CD4-positive, alpha-beta memory T cell (primary cell): ENCODE measurements at regions of chr6 and their contacts with region 1.

Region 1: DNA sequence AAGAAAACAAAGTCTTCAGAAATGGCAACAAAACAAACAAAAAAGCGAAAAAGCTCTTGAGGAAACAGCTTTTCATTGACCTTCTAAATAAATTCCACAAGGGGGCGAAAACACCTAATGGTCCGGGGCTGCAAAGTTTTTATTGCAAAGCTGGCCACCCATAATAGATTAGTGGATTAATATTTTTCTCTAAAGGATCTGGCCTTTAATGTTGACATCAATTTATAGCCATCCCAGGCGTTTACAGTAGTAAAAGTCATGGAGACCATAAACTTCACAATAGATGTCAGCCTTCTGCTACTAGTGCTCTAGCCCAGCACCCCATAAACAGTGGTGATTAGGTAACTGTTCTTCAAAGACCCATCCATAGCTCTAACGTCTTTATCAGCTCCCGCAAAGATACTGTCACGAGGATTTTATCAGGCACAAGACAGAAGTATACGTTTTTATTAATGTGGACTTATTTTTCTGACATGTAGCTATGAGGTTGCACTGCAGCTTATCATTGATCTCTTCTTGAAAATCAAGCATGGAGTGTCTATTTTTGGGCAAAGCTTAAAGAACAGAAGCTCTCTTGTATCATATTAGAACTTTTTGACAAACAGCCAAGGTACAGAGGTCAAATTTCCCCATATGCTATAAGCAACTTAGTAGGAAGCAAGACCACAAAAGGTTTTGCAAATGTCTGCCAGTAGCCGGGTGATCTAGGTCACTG is 4.7 kb downstream of the CITED2 start:
- DNase-seq: peak; percentile 36 to 54 (median 48)
- H3K4me3 ChIP-seq: no peak overlapping the region
- H3K4me3 Mint-ChIP-seq: peak overlapping the region; percentile 60 to 100 (median 84)
- H3K27ac ChIP-seq: peak overlapping the region; percentile 40
- H3K27ac Mint-ChIP-seq: peak overlapping the region; percentile 80 to 99 (median 88)
- H3K4me1 ChIP-seq: peaks cover 40% of the 10 kb centered on the region
- H3K4me1 Mint-ChIP-seq: peaks cover 29 to 62% (median 36%) of the 10 kb centered on the region in 4 donors
- H3K27me3 ChIP-seq: no peaks in the 10 kb centered on the region
- H3K27me3 Mint-ChIP-seq: no peaks in the 10 kb centered on the region

Region 2: GRCh38 chr6:138817822-138818308 is 551.9 kb before region 1 on chr6:
- CTCF ChIA-PET with region 1: interaction called, 28 read pairs
- POLR2A ChIA-PET with region 1: interaction called, 3 read pairs
- intact Hi-C with region 1: loop called (anchors 1 kb)
- DNase-seq: no peak
- H3K4me3 ChIP-seq: no peak overlapping the region
- H3K4me3 Mint-ChIP-seq: no peak overlapping the region
- H3K27ac ChIP-seq: no peak overlapping the region
- H3K27ac Mint-ChIP-seq: peak overlapping the region in 1 of 7 donors; percentile 55
- H3K4me1 ChIP-seq: no peaks in the 10 kb centered on the region
- H3K4me1 Mint-ChIP-seq: peaks cover 3 to 10% (median 7%) of the 10 kb centered on the region in 4 donors
- H3K27me3 ChIP-seq: no peaks in the 10 kb centered on the region
- H3K27me3 Mint-ChIP-seq: peaks cover 0 to 2% of the 10 kb centered on the region in 2 donors

Region 3: GRCh38 chr6:139230391-139230840 is 139.3 kb before region 1 on chr6:
- CTCF ChIA-PET with region 1: interaction called, 38 read pairs
- POLR2A ChIA-PET with region 1: interaction called, 9 read pairs
- intact Hi-C with region 1: loop called (anchors 1 kb)
- DNase-seq: peak in 4 of 5 donors; percentile 17 to 31 (median 22)
- H3K4me3 ChIP-seq: no peak overlapping the region
- H3K4me3 Mint-ChIP-seq: no peak overlapping the region
- H3K27ac ChIP-seq: no peak overlapping the region
- H3K27ac Mint-ChIP-seq: peak overlapping the region in 2 of 7 donors; percentile 19 to 65
- H3K4me1 ChIP-seq: no peaks in the 10 kb centered on the region
- H3K4me1 Mint-ChIP-seq: peaks cover 6 to 13% (median 9%) of the 10 kb centered on the region in 4 donors
- H3K27me3 ChIP-seq: no peaks in the 10 kb centered on the region
- H3K27me3 Mint-ChIP-seq: no peaks in the 10 kb centered on the region

Region 4: GRCh38 chr6:139533573-139534471 is 164.1 kb after region 1 on chr6:
- CTCF ChIA-PET with region 1: interaction called, 21 read pairs
- POLR2A ChIA-PET with region 1: interaction called, 153 read pairs
- intact Hi-C with region 1: loop called (anchors 2 kb)
- DNase-seq: peak in 2 of 5 donors; percentile 6 to 10
- H3K4me3 ChIP-seq: no peak overlapping the region
- H3K4me3 Mint-ChIP-seq: peak overlapping the region; percentile 28 to 93 (median 76)
- H3K27ac ChIP-seq: peak overlapping the region; percentile 39
- H3K27ac Mint-ChIP-seq: peak overlapping the region; percentile 83 to 96 (median 92)
- H3K4me1 ChIP-seq: peaks cover 84% of the 10 kb centered on the region
- H3K4me1 Mint-ChIP-seq: peaks cover 47 to 76% (median 59%) of the 10 kb centered on the region in 4 donors
- H3K27me3 ChIP-seq: no peaks in the 10 kb centered on the region
- H3K27me3 Mint-ChIP-seq: no peaks in the 10 kb centered on the region

Region 5: GRCh38 chr6:139895205-139895793 is 525.6 kb after region 1 on chr6:
- CTCF ChIA-PET with region 1: interaction called, 24 read pairs
- POLR2A ChIA-PET with region 1: interaction called, 5 read pairs
- intact Hi-C with region 1: loop called (anchors 1 kb)
- DNase-seq: no peak
- H3K4me3 ChIP-seq: no peak overlapping the region
- H3K4me3 Mint-ChIP-seq: no peak overlapping the region
- H3K27ac ChIP-seq: no peak overlapping the region
- H3K27ac Mint-ChIP-seq: no peak overlapping the region
- H3K4me1 ChIP-seq: no peaks in the 10 kb centered on the region
- H3K4me1 Mint-ChIP-seq: no peaks in the 10 kb centered on the region
- H3K27me3 ChIP-seq: no peaks in the 10 kb centered on the region
- H3K27me3 Mint-ChIP-seq: peaks cover 2 to 3% of the 10 kb centered on the region in 2 donors

Region 6: DNA sequence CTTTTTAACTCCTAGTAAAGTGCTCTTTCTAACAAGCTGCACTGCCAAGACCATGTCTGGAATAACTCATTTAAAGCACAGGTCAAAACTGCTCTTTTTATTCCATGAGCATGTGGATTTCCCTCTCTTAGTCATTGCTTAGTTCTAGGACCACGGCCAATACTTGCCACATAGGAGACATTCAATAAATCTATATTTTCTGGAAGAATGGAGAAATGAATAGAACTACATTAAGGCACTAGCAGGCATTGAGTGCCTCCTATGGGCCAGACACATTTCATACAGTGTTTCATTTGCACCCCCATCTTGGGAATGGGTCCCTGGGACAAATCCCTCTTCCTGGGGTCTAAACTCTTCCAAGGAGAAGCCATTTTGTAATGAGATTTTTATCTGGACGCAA is 557.5 kb after region 1 on chr6:
- CTCF ChIA-PET with region 1: interaction called, 10 read pairs
- POLR2A ChIA-PET with region 1: interaction called, 3 read pairs
- intact Hi-C with region 1: loop called (anchors 1 kb)
- DNase-seq: peak in 1 of 5 donors; percentile 3
- H3K4me3 ChIP-seq: no peak overlapping the region
- H3K4me3 Mint-ChIP-seq: no peak overlapping the region
- H3K27ac ChIP-seq: no peak overlapping the region
- H3K27ac Mint-ChIP-seq: no peak overlapping the region
- H3K4me1 ChIP-seq: no peaks in the 10 kb centered on the region
- H3K4me1 Mint-ChIP-seq: no peaks in the 10 kb centered on the region
- H3K27me3 ChIP-seq: no peaks in the 10 kb centered on the region
- H3K27me3 Mint-ChIP-seq: peaks cover 2 to 12% of the 10 kb centered on the region in 2 donors

Region 7: GRCh38 chr6:140671926-140672325 is 1302.2 kb after region 1 on chr6:
- CTCF ChIA-PET with region 1: interaction called, 3 read pairs
- POLR2A ChIA-PET with region 1: no interaction called
- intact Hi-C with region 1: loop called (anchors 5 kb)
- DNase-seq: peak in 1 of 5 donors; percentile 1
- H3K4me3 ChIP-seq: no peak overlapping the region
- H3K4me3 Mint-ChIP-seq: no peak overlapping the region
- H3K27ac ChIP-seq: no peak overlapping the region
- H3K27ac Mint-ChIP-seq: no peak overlapping the region
- H3K4me1 ChIP-seq: no peaks in the 10 kb centered on the region
- H3K4me1 Mint-ChIP-seq: peaks cover 0 to 2% (median 0%) of the 10 kb centered on the region in 4 donors
- H3K27me3 ChIP-seq: no peaks in the 10 kb centered on the region
- H3K27me3 Mint-ChIP-seq: peaks cover 4 to 5% of the 10 kb centered on the region in 2 donors